Activated naive CD4-positive, alpha-beta T cell treated with anti-CD3 and anti-CD28 coated beads for 36 hours (primary cell): ENCODE measurements at regions of chr1 and their contacts with region 1.

Region 1: GRCh38 chr1:171841050-171841940 is at the start of gene DNM3:
- DNase-seq: peak; percentile 66
- H3K4me3 Mint-ChIP-seq: peak within 1 kb of the TSS; percentile 79
- H3K27ac Mint-ChIP-seq: no peak within 1 kb of the TSS
- H3K4me1 Mint-ChIP-seq: peaks cover 14% of the 10 kb centered on the region
- H3K27me3 Mint-ChIP-seq: peaks cover 13% of the 10 kb centered on the region
- total RNA-seq, gene DNM3: 0.96 to 0.98 TPM

Region 2: DNA sequence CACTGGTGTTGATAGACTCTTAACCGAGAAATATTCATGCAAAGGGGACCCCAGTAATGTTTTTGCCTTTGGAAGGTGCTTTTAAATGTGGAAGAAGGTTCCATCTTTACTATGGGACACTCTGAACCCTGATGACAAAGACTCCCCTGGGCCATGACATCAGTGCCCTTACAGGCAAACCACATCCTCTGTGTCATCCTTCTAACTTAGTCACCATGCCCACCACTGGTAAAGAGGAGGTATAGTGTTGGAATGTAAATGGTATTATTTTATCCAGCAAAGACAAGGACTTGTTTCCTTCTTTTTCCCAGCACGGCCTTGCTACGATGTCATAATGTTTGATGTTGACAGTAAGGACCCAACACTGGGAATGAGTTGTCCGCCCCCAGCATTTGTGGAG is 47.2 kb before region 1 on chr1:
- CTCF ChIA-PET with region 1: no interaction called
- intact Hi-C with region 1: no loop called
- DNase-seq: peak; percentile 78
- H3K4me3 Mint-ChIP-seq: no peak overlapping the region
- H3K27ac Mint-ChIP-seq: peak overlapping the region; percentile 89
- H3K4me1 Mint-ChIP-seq: peaks cover 23% of the 10 kb centered on the region
- H3K27me3 Mint-ChIP-seq: no peaks in the 10 kb centered on the region

Region 3: GRCh38 chr1:171817511-171818265 is 23.6 kb before region 1 on chr1:
- CTCF ChIA-PET with region 1: no interaction called
- intact Hi-C with region 1: loop called (anchors 1 kb)
- DNase-seq: peak; percentile 67
- H3K4me3 Mint-ChIP-seq: no peak overlapping the region
- H3K27ac Mint-ChIP-seq: peak overlapping the region; percentile 31
- H3K4me1 Mint-ChIP-seq: peaks cover 11% of the 10 kb centered on the region
- H3K27me3 Mint-ChIP-seq: no peaks in the 10 kb centered on the region

Region 4: GRCh38 chr1:171898941-171899340 is 57.6 kb after region 1 on chr1:
- CTCF ChIA-PET with region 1: no interaction called
- intact Hi-C with region 1: no loop called
- DNase-seq: no peak
- H3K4me3 Mint-ChIP-seq: no peak overlapping the region
- H3K27ac Mint-ChIP-seq: no peak overlapping the region
- H3K4me1 Mint-ChIP-seq: peaks cover 7% of the 10 kb centered on the region
- H3K27me3 Mint-ChIP-seq: no peaks in the 10 kb centered on the region